ENCODE measurements at regions of chr10 and their contacts with region 1.

Region 1: GRCh38 chr10:129030996-129031843 is 435.8 kb upstream of the MGMT start:
- DNase-seq: peak; percentile 47 to 78 (median 60)
- ATAC-seq: peak in 3 of 4 donors; percentile 88 to 97 (median 92)
- H3K4me3 ChIP-seq: no peak overlapping the region
- H3K27ac ChIP-seq: no peak overlapping the region
- H3K4me1 ChIP-seq: peaks cover 0 to 12% (median 2%) of the 10 kb centered on the region in 12 donors
- H3K27me3 ChIP-seq: peaks cover 0 to 39% (median 6%) of the 10 kb centered on the region in 9 donors
- CTCF ChIP-seq: peak; percentile 85 to 97 (median 93)
- POLR2A ChIP-seq: no peak

Region 2: DNA sequence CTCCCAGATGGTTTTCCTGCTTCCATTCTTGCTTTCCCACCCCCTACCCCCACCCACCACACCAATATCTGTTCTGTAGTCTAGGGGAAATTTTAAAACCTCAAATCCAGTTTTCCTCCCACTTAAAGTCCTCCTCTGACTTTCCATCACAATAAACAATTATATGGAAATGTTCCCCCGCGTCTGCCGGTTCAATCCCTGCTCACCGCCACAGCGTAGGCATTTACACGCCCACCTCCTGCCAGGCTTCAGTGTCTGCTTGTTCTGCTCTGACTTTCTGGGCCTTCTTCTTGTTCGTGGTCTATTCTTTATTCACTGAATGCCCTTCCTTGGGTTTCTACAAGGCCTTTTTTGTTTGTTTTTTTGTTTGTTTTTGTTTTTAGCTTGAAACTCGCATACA is 272.0 kb before region 1 on chr10:
- intact Hi-C with region 1: no loop called
- DNase-seq: no peak
- ATAC-seq: no peak
- H3K4me3 ChIP-seq: no peak overlapping the region
- H3K27ac ChIP-seq: no peak overlapping the region
- H3K4me1 ChIP-seq: no peaks in the 10 kb centered on the region
- H3K27me3 ChIP-seq: no peaks in the 10 kb centered on the region
- CTCF ChIP-seq: no peak
- POLR2A ChIP-seq: no peak

Region 3: GRCh38 chr10:129416956-129417765 is 385.9 kb after region 1 on chr10:
- intact Hi-C with region 1: loop called in 1 of 10 experiments (anchors 10 kb)
- DNase-seq: peak in 1 of 5 donors; percentile 49
- ATAC-seq: peak in 2 of 4 donors; percentile 49 to 70
- H3K4me3 ChIP-seq: no peak overlapping the region
- H3K27ac ChIP-seq: peak overlapping the region in 6 of 12 donors; percentile 4 to 48 (median 42)
- H3K4me1 ChIP-seq: peaks cover 0 to 23% (median 4%) of the 10 kb centered on the region in 12 donors
- H3K27me3 ChIP-seq: peaks cover 0 to 8% (median 0%) of the 10 kb centered on the region in 9 donors
- CTCF ChIP-seq: no peak
- POLR2A ChIP-seq: no peak

Region 4: DNA sequence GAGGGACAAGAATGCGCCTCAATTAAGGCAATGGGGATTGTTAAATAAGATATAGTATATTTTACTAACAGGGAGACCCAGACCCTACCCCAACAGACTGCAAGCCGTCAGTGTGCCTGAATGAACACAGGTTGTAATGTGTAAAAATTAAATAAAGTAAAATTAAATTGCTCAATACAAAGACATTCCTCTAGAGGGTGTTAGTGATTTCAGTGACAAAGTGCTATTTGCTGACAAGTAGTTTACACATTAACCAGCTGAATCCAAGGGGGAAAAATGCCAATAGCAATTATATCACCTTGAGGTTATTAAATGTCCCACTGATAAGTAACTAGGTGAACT is 822.3 kb after region 1 on chr10:
- intact Hi-C with region 1: loop called in 2 of 10 experiments (anchors 10 kb)
- DNase-seq: no peak
- ATAC-seq: no peak
- H3K4me3 ChIP-seq: peak overlapping the region in 2 of 12 donors; percentile 3 to 9
- H3K27ac ChIP-seq: peak overlapping the region in 1 of 12 donors; percentile 2
- H3K4me1 ChIP-seq: peaks cover 0 to 5% (median 0%) of the 10 kb centered on the region in 12 donors
- H3K27me3 ChIP-seq: peaks cover 0 to 3% (median 0%) of the 10 kb centered on the region in 9 donors
- CTCF ChIP-seq: peak in 11 of 12 donors; percentile 23 to 55 (median 35)
- POLR2A ChIP-seq: no peak

Region 5: GRCh38 chr10:129883626-129884396 is 852.6 kb after region 1 on chr10:
- intact Hi-C with region 1: loop called in 1 of 10 experiments (anchors 5 kb)
- DNase-seq: no peak
- ATAC-seq: no peak
- H3K4me3 ChIP-seq: no peak overlapping the region
- H3K27ac ChIP-seq: no peak overlapping the region
- H3K4me1 ChIP-seq: peaks cover 0 to 25% (median 1%) of the 10 kb centered on the region in 12 donors
- H3K27me3 ChIP-seq: peaks cover 0 to 5% (median 0%) of the 10 kb centered on the region in 9 donors
- CTCF ChIP-seq: no peak
- POLR2A ChIP-seq: no peak

Region 6: DNA sequence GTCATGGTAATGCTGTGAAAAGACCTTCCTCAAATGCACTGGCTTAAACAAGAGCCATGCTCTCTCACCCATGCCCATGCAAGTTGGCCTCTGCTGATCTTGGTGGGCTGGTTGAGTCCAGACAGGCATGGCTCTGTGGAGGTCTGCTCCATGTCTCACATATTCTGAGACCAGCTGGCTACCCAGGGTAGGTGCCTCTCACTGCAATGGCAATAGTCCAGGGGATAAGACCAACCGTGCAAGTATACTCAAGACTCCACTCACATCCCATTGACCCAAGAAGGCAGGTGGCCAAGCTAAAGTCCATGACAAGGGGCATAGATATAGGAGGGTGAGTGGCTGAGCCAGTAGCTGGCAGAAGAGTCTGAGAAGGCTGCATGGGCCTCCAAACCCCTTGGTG is 947.1 kb after region 1 on chr10:
- intact Hi-C with region 1: loop called in 3 of 10 experiments (anchors 5 kb)
- DNase-seq: no peak
- ATAC-seq: no peak
- H3K4me3 ChIP-seq: no peak overlapping the region
- H3K27ac ChIP-seq: no peak overlapping the region
- H3K4me1 ChIP-seq: no peaks in the 10 kb centered on the region
- H3K27me3 ChIP-seq: peaks cover 0 to 33% (median 10%) of the 10 kb centered on the region in 9 donors
- CTCF ChIP-seq: no peak
- POLR2A ChIP-seq: no peak

Region 7: DNA sequence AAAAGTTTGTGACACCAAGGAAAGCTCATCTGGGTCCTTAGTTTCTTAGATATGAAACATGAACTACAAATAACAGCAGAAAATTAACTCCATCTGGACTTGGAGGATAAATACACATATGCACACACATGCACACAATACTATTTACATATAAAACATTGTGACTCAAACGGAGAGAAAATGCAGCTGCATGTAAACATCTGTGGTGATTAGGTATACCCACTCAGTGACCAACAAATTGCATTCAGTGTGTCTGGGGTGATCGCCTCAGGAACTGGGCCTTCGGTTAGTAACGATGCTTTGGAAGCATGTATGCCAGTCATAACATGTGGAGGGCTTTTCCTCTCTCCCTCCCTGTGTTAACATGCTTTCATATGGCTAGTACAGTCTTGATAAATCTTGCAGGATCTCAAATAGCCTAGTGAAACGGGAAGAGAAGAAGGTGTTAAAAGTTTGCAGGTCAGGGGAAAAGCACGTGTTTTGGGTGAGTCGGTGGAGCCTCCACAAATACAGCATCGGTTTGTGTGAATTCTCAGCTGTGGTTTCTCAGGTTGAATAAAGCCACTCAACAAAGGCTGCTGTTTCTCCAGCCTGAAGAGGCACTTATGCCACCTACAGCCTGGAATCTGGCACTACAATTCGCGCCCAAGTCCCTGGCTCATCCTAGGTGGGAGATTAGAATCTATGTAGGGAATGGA is 1096.3 kb after region 1 on chr10:
- intact Hi-C with region 1: loop called in 2 of 10 experiments (anchors 5 to 10 kb)
- DNase-seq: peak in 2 of 5 donors; percentile 32 to 36
- ATAC-seq: peak in 3 of 4 donors; percentile 66 to 80 (median 77)
- H3K4me3 ChIP-seq: no peak overlapping the region
- H3K27ac ChIP-seq: no peak overlapping the region
- H3K4me1 ChIP-seq: peaks cover 0 to 6% (median 0%) of the 10 kb centered on the region in 12 donors
- H3K27me3 ChIP-seq: peaks cover 0 to 13% (median 5%) of the 10 kb centered on the region in 9 donors
- CTCF ChIP-seq: peak; percentile 52 to 83 (median 72)
- POLR2A ChIP-seq: no peak